ENCODE measurements at regions of chr17 and their contacts with region 1.

Region 1: GRCh38 chr17:35747540-35748017 is 5.5 kb downstream of the GAS2L2 start:
- DNase-seq: no peak
- H3K4me3 ChIP-seq: no peak overlapping the region
- H3K27me3 ChIP-seq: peaks cover 13% of the 10 kb centered on the region
- CTCF ChIP-seq: peak; percentile 82

Region 2: DNA sequence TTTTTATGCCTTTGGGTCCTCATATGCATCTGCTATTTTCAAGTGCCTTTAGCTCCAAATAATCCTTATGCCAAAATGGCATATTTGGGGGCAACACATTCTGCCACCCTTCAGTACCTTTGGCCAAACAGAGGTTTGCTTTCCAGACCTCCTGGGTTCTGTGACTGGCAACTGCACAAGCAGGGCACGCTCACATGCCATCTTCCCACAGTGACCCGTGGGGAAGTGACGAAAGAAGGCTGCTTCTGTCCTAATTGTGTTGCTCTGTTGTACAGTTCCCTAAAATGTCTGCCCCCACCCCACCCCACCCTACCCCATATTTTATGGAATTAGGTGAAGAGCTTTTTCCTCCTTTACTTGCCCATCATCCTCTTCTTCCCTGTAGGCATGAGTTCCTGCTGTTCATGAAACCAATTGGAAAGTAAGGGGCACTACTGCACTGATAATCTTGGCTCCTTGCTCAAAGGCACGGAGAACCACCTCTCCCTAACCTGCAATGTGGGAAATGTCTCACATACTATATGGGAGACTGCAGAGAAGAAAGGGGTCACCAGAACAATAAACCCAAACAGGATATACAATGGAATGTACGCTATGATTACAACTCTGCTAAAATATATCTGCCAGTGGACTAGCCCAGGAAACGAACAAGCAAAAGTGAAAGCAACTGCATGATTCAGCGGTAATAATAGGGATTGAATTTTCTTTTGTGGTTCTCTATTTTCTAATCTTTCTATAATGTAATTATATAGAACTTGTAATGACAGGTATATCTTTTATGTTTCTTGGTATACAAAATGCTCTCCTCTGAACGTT is 206.8 kb before region 1 on chr17:
- CTCF ChIA-PET with region 1: interaction called, 16 read pairs
- POLR2A ChIA-PET with region 1: no interaction called
- DNase-seq: no peak
- H3K4me3 ChIP-seq: no peak overlapping the region
- H3K27me3 ChIP-seq: no peaks in the 10 kb centered on the region
- CTCF ChIP-seq: no peak

Region 3: DNA sequence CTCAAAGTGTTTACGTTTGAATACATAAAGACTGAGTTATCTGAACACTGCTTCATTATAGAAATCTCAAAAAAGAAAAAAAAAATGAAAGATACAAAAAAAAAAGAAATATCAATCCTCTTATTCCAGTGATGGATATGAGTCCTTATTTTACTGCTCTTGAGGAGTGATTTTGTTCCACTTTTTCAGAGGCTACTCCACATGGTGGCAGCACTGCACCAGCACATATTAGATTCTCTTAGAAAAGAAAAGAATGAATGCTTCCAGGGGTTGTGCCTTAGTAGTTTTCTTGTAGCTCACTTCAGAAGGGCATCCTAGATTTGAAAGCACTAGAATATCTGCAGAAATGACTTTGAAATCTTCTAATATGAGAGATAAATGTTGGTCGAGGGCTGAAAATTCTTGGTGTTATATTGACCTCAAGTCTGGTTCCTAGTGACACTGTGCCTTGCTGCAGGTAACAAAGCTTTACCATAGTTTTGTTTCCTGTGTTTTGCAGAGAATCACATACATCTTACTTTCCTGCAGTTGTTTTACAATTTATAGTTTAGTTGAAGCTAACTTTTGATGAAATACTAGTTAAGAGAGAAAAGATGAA is 134.6 kb before region 1 on chr17:
- CTCF ChIA-PET with region 1: interaction called, 268 read pairs
- POLR2A ChIA-PET with region 1: no interaction called
- DNase-seq: no peak
- H3K4me3 ChIP-seq: no peak overlapping the region
- H3K27me3 ChIP-seq: no peaks in the 10 kb centered on the region
- CTCF ChIP-seq: peak; percentile 74

Region 4: DNA sequence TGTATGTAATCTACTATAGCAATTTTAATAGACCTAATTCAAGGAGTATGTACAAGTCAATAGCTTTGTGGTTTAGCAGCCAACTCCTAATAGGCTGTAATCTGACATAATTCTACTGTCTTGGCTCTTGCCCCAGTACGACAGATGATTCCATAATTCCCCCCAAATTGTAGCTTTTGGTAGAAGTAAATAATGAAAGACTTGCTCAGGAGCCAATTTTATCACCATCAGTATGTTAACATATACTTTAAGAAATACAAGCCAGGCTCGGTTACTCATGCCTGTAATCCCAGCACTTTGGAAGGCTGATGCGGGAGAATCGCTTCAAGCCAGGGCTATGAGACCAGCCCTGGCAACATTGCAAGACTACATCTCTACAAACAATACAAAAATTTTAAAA is 106.5 kb before region 1 on chr17:
- CTCF ChIA-PET with region 1: interaction called, 16 read pairs
- POLR2A ChIA-PET with region 1: no interaction called
- DNase-seq: no peak
- H3K4me3 ChIP-seq: no peak overlapping the region
- H3K27me3 ChIP-seq: no peaks in the 10 kb centered on the region
- CTCF ChIP-seq: no peak

Region 5: DNA sequence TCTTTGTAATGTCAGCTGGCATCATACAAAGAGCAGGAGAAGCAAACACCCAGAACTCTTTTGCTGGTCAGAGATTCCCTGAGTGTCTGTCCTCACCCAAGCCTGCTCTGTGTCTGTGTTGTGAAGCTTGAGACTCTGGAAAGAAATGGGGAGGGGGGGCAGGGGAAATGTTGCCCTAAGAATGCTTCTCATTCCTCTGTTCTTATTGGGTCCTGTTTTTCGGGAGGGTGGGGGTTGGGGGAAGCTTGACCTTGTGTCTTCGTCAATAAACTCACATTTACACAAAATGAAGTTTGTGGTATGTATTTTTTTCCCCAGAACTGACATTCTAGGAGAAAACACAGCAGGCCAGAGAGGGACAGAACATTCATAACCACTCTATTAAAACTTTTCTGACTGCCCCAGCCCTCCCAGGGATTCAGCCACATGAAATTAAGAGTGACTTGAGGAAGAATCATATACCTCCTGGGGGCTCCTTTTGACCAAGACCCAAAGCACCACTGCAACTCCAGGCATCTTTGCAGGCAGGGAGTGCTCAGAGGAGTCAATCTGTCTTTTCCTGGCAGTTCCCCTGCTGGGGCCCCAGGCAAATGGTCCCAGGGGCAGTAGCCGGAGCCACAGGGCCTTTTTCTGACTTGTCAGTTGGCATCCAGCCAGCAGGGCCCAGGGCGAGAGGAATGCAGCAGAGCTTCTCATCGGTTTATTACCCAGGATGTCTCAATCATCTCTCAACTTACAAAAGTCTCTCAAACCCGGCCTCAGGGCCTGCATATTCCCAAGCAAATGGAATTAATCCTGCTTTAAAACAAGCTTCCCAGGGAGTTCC is 21.2 kb before region 1 on chr17:
- CTCF ChIA-PET with region 1: interaction called, 27 read pairs
- POLR2A ChIA-PET with region 1: no interaction called
- DNase-seq: peak; percentile 69
- H3K4me3 ChIP-seq: no peak overlapping the region
- H3K27me3 ChIP-seq: no peaks in the 10 kb centered on the region
- CTCF ChIP-seq: no peak

Region 6: DNA sequence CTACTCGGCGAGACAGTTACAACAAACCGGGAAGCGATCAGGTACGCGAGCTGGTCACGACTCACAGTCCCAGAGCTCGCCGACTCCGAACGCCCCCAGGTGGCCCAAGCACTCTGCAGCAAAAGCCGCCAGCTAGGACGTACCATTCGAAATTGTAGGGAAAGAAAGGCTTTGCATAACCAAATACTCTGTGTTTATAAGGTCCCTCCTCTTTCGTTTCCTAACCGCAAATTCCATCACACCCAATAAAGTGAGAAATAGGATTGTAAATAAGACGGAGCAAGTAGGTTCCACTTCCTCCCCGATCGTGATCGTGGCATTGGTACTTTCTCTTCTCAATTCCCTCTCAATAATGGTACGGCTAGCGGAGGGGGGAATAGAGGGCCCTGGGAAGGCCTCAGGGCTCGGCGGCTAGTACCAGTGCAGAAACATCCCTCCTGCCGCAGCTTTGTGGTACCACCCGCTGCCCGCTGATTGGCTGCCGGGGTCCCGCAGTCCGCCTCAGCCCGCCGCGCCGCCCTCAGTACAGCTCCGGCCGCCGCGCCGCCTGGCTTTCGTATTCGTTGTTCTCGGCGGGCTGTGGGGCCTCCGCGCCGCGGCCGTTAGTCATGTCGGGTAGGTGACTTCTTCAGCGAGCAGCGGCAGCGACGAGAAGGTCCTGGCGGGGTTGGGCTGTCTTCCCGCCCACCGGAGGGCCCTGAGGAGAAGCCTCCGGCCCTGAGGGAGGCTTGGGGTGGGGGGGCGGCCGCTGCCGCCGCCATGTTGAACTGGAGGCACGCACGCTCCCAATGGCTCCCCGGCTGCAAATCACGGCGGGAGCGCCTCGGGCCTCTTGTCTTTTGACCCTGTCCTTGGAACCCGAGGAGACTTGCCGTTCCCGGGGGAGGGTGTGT is 61.6 kb after region 1 on chr17 and contains the start of gene TAF15:
- CTCF ChIA-PET with region 1: interaction called, 11 read pairs
- POLR2A ChIA-PET with region 1: interaction called, 3 read pairs
- DNase-seq: peak; percentile 94
- H3K4me3 ChIP-seq: peak within 1 kb of the TSS; percentile 71
- H3K27me3 ChIP-seq: no peaks in the 10 kb centered on the region
- CTCF ChIP-seq: peak; percentile 91
- polyA plus RNA-seq, gene TAF15: 27.4 and 49.6 TPM in 2 replicates

Region 7: DNA sequence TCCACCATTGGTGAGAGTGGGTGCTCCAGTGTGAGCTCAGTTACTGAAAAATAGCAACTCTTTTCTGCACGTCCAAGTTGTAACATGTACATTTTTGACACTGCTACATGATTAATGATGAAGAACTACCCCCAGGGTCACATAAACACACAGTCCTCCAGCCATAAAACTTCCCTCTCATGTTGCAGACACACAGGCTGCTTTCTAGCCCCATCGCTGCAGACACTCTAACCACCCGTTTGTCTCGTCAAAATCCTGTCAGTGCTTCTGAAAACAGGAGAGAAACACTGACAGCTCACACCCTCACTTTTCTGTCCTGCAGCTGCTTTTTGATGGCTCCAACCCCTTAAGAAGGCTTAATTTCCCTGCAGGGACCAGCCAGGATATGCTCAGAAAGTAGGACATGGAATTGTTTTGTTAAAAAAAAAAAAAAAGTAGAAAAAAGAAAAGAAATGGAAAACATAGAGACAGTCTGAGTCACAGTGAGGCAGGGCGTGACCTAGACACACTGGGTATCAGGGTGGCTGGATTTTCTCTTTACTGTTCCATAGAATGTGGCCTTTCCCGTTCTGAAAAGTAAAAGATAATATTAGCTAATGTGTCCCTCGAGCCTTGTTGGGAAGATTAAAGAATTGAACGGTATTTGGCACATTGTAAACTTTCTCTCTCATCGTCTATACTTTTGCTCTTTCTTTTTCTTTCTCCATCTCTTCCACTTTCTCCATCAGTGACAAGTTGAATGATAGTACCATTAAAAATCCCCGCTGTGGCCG is 153.3 kb after region 1 on chr17:
- CTCF ChIA-PET with region 1: no interaction called
- POLR2A ChIA-PET with region 1: no interaction called
- DNase-seq: no peak
- H3K4me3 ChIP-seq: no peak overlapping the region
- H3K27me3 ChIP-seq: peaks cover 2% of the 10 kb centered on the region; the same call in 1 of the 2 replicates
- CTCF ChIP-seq: no peak